Left colon (tissue), 2 donors: ENCODE measurements at regions of chr19 and their contacts with region 1.

Region 1: DNA sequence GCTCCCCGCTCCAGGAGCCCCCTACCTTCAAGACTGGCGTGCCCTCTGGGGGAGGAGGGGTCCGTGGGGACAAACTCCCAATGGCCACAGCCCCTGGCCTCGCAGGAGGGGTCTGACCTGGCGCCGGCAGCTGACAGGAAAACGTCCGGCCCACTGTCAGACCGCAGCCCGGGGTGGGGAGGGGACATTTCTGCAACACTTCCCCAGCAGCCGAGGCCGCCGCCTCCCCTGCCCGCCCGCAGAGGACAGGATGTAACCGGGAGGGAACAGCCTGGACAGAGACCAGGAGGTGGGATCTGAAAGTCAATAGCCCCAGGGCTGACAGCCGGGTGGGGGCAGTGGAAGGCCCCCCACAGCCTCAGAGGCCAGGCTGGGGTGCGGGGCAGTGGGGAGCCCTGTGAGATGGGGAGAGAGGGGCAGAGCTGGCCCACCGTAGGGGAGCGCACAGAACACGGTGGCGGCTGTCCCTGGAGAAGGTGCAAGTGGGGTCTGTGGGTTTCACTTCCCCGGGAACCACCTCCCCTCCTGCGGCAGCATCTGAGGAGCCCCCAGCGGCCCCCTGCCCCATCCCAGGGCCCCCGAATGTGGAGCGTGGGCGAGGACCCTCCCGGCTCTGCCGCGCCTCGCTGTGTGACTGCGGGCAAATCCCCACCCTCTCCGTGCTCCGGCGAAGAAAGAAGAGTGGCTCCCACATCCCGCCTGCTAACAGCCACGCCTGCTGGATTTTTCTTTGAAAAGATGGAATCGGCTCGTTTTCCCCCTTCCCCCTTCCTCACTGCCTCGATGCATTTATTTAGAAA is at the start of gene PEAK3:
- DNase-seq: peak; percentile 72 to 75
- ATAC-seq: no peak
- total RNA-seq, gene PEAK3: 0.15 to 0.78 TPM

Region 2: DNA sequence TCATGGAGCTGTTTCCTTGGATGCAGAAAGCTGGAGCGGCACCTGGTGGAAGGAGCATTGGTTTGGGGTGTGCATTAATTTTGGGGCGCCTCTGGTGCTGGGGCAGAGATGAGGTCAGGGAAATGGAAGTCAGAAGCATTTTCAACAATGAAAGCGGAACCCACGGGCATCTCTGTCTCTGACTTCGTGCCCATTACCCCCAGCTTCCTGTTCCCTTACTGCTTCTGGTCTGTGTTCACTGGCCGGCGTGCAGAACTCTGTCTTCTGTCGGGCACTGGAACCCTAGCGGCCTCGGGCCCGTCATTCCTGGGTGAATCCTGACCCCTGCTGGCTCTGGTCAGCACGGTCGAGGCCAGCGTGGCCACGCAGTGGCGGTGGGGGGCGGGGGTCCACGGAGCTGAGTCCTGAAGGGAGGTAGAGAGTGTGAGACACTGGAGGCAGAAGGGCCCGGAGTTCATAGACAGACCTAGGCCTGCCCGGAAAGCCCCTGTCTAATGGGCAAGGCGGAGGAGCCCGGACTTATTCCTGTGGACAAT is 33.6 kb after region 1 on chr19:
- intact Hi-C with region 1: loop called in 1 of 2 experiments (anchors 5 kb)
- DNase-seq: peak; percentile 65 to 72
- ATAC-seq: peak; percentile 96

Region 3: GRCh38 chr19:2337329-2338043 is 55.2 kb after region 1 on chr19:
- intact Hi-C with region 1: no loop called
- DNase-seq: no peak
- ATAC-seq: no peak

Region 4: GRCh38 chr19:2361246-2362045 is 79.2 kb after region 1 on chr19:
- intact Hi-C with region 1: no loop called
- DNase-seq: no peak
- ATAC-seq: no peak